H1 (cell line): ENCODE measurements at regions of chr1 and their contacts with region 1.

Region 1: DNA sequence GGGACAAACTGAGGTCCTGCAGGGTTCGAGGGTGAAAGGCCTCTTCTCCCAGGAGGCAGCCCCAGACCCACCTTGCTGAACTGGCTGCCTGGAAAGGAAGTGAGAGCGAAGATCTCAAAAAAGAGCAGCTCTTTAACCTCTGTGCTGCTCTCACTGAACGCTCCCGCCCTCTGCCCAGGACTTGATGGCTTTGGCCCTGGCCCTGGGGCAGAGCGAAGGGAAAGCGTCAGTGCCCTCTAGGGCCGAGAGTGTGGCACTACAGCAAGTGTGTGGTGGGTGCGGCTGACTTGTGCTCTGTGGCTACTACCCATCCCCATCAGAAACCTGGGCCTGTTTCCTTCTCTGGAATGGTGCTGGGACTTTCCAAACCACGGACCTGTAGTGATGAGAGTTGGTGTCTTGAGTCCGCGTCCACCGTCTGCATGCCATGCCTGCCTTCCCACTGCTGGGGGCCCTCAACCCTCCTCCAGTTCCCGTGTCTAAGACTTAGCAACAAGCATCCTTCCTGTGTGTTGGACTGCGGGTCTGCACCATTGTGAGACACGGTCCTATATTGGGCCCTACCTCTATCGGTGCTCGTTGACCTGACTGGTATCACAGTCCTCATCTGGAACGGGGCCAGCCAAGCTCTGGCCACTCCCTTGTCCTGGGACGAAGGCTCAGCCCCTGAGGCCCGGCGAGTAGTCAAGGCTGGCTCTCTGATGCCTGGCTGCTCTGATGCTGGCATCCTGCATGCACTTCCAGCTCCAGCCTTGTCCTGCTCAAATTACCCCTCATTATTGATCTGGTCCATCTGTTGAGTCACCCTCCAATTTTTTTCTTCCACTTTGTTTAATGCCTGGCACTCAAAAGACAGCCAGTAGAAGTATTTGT is 180.3 kb downstream of the DISC1 start:
- DNase-seq: peak; percentile 53 to 79
- H3K4me3 ChIP-seq: no peak overlapping the region
- H3K27ac ChIP-seq: no peak overlapping the region
- H3K4me1 ChIP-seq: peaks cover 0 to 2% (median 0%) of the 10 kb centered on the region in 4 experiments; a peak in 1 of 7 replicates
- H3K27me3 ChIP-seq: no peaks in the 10 kb centered on the region
- CTCF ChIP-seq: peak; percentile 88 to 99 (median 98)
- EP300 ChIP-seq: no peak
- POLR2A ChIP-seq: no peak
- RAD21 ChIP-seq: peak; percentile 89 to 92

Region 2: DNA sequence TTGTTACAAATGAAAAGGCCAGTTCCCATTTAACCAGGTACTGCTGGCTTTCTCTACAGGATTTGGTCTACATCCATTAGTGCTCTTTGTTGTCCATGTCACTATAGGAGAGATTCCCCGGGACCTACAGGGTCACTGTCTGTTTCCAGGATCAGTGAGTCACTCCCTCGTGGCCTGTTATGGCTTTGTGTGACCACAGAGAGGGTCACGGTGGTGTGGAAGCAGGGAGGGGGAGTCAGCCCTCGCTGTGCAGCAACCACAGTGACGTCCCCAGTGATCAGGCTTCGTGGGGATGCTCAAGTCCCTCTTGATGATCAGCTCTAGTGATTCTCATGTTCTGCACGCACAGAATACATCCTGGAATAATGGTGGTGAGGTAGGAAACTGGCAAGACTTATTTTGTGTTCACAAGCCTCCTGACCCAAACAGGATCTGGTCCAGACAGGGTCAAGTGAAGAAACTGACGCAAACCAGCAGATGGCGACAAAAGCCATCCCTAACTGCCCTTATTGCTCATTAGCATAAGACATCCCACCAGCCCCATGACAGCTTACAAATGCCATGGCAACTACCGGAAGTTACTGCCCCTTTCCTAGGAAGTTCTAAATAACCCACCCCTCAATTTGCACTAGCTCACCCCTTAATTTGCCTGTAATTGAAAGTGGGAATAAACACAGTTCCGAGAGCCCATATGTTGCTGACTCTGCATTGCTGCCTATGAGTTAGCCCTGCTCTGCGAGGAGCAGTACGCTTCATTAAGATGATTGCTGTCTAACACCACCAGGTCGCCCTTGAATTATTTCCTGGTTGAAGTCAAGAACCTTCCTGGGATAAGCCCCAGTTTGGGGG is 81.8 kb before region 1 on chr1:
- CTCF ChIA-PET with region 1: interaction called, 17 read pairs
- POLR2A ChIA-PET with region 1: no interaction called
- DNase-seq: peak; percentile 51 to 71
- H3K4me3 ChIP-seq: no peak overlapping the region
- H3K27ac ChIP-seq: no peak overlapping the region
- H3K4me1 ChIP-seq: peaks cover 0 to 4% (median 0%) of the 10 kb centered on the region in 4 experiments; a peak in 1 of 7 replicates
- H3K27me3 ChIP-seq: no peaks in the 10 kb centered on the region
- CTCF ChIP-seq: peak; percentile 71 to 86 (median 72)
- EP300 ChIP-seq: no peak
- POLR2A ChIP-seq: no peak
- RAD21 ChIP-seq: peak; percentile 82 to 85

Region 3: GRCh38 chr1:231792639-231793038 is 14.2 kb before region 1 on chr1:
- CTCF ChIA-PET with region 1: interaction called, 13 read pairs
- POLR2A ChIA-PET with region 1: no interaction called
- DNase-seq: no peak
- H3K4me3 ChIP-seq: no peak overlapping the region
- H3K27ac ChIP-seq: no peak overlapping the region
- H3K4me1 ChIP-seq: no peaks in the 10 kb centered on the region
- H3K27me3 ChIP-seq: no peaks in the 10 kb centered on the region
- CTCF ChIP-seq: no peak
- EP300 ChIP-seq: no peak
- POLR2A ChIP-seq: no peak
- RAD21 ChIP-seq: no peak

Region 4: GRCh38 chr1:231818337-231818736 is 11.5 kb after region 1 on chr1:
- CTCF ChIA-PET with region 1: interaction called, 25 read pairs
- POLR2A ChIA-PET with region 1: interaction called, 4 read pairs
- DNase-seq: no peak
- H3K4me3 ChIP-seq: no peak overlapping the region
- H3K27ac ChIP-seq: no peak overlapping the region
- H3K4me1 ChIP-seq: no peaks in the 10 kb centered on the region
- H3K27me3 ChIP-seq: peaks cover 0 to 1% (median 0%) of the 10 kb centered on the region in 4 experiments; a peak in 1 of 7 replicates
- CTCF ChIP-seq: no peak
- EP300 ChIP-seq: no peak
- POLR2A ChIP-seq: no peak
- RAD21 ChIP-seq: no peak